ENCODE measurements at regions of chr22 and their contacts with region 1.

Region 1: DNA sequence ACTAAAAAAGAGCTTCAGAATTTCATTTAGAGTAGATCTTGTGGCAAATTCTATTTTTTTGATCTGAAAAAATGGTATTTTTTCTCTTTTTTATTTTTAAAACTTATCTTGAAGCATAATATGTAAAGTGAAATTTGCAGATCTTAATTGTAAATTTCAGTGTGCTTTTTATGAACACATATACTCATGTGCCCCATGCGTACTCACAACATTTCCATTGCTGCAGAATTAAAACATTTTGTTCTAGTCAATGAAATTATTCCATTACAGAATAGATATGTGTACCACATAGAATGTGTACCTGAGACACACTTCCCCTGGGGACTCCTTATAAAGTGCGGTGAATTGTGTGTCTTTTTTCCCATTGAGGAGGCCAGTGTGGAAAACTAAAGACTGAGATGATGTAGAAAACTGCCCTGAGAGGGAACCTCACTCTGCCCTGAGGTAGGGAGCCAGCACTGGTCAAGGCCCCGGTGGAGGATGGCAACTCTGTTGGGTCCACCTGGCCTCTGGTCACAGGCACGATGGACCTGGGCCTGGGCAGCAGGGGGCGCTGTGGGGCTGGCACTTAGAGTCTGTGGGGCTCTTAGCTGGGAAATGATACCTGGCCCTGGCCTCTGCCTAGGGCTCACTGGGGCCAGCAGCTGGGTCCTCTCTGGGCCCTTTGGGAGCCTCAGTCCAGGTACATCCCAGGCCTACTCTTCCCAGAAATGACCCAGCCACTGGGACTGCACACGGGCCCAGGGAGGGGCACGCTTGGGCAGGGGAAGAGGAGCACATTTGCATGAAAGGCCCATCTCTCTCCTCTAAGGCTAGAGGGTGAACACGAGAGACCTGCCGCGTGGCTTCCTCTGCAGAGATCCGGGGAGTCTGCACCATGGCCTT is 77.9 kb upstream of the TOP3B start:
- DNase-seq: peak; percentile 69
- ATAC-seq: peak; percentile 73
- H3K4me3 Mint-ChIP-seq: no peak overlapping the region
- H3K27ac Mint-ChIP-seq: peak overlapping the region; percentile 6
- H3K4me1 Mint-ChIP-seq: peaks cover 38% of the 10 kb centered on the region
- H3K27me3 Mint-ChIP-seq: no peaks in the 10 kb centered on the region
- CTCF ChIP-seq: no peak

Region 2: DNA sequence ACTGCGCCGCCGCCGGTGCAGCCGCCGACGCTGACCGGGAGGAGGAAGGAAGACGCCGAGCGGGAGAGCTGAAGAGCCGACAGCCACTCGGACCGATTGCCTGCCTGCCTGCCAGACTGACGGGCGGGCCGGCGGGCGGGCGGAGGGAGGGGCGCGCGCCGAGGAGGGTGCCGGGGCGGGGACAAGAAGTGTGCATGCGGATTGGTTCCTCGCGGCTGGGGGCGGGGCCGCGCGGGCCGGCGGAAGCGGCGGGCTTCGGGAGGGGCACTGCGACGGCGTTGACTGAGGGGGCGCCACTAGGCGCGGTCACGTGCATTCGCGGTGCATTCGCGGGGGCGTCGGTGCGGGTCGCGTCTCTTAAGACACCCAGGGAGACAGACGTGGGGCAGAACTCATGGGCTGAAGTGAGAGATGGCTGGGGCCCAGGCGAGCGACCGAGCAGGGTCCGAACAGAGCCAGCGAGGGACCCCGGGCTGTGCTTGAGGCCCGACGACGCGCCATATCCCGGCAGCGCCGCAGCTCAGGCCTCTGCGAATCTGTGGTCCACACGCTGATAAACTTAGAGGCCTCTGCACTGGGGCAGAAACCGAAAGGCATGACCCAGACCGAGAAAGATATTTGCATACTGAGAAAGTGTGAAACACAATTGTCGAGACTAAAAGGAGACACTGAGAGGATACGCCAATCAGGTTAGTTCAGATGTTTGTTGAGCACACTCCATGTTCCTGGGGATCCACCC is 192.7 kb before region 1 on chr22 and contains the start of gene MAPK1:
- CTCF ChIA-PET with region 1: no interaction called
- POLR2A ChIA-PET with region 1: no interaction called
- intact Hi-C with region 1: no loop called
- DNase-seq: peak; percentile 94
- ATAC-seq: peak; percentile 88
- H3K4me3 Mint-ChIP-seq: peak within 1 kb of the TSS; percentile 95
- H3K27ac Mint-ChIP-seq: peak within 1 kb of the TSS; percentile 100
- H3K4me1 Mint-ChIP-seq: peaks cover 50% of the 10 kb centered on the region
- H3K27me3 Mint-ChIP-seq: no peaks in the 10 kb centered on the region
- CTCF ChIP-seq: no peak
- total RNA-seq, gene MAPK1: 130 and 149 TPM in 2 replicates

Region 3: GRCh38 chr22:21972293-21972779 is 88.1 kb before region 1 on chr22:
- CTCF ChIA-PET with region 1: interaction called, 17 read pairs
- POLR2A ChIA-PET with region 1: no interaction called
- intact Hi-C with region 1: loop called (anchors 2 kb)
- DNase-seq: peak; percentile 56
- ATAC-seq: peak; percentile 77
- H3K4me3 Mint-ChIP-seq: no peak overlapping the region
- H3K27ac Mint-ChIP-seq: no peak overlapping the region
- H3K4me1 Mint-ChIP-seq: peaks cover 2% of the 10 kb centered on the region
- H3K27me3 Mint-ChIP-seq: no peaks in the 10 kb centered on the region
- CTCF ChIP-seq: peak; percentile 79

Region 4: DNA sequence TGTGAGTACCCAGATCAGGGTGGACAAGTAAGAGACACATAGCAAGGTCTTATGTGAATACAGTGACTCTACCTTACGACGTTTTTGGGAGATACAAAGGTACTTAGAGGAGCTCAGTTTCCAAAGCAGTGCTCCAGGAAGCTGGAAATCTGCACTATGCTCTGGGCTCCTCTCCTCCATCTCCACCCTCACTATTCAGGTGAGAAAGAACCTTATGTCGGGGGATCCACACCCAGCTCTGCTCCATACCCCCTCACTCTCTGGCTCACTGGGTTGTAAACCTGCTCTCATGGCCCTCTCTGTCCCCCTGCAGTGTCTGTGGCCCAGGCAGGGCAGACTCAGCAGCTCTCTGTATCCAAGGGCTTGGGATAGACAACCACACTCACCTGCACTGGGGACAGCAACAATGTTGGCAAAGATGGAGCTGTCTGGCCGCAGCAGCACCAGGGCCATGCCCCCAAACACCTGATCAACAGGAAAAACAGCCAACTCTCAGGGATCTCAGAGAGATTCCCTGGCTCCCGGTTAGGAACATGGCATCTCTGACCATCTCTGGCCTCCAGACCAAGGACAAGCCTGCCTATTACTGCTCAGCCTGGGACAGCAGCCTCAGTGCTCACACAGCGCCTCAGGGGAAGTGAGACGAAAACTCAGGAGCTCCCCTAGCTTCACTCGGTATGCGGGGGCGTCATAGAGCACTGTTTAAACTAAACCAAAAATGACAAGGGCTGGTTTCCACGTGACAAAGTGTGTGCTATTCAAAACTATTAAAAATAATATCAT is 17.0 kb before region 1 on chr22:
- CTCF ChIA-PET with region 1: interaction called, 43 read pairs
- POLR2A ChIA-PET with region 1: interaction called, 4 read pairs
- intact Hi-C with region 1: loop called (anchors 2 kb)
- DNase-seq: no peak
- ATAC-seq: peak; percentile 73
- H3K4me3 Mint-ChIP-seq: peak overlapping the region; percentile 82
- H3K27ac Mint-ChIP-seq: peak overlapping the region; percentile 82
- H3K4me1 Mint-ChIP-seq: peaks cover 73% of the 10 kb centered on the region
- H3K27me3 Mint-ChIP-seq: no peaks in the 10 kb centered on the region
- CTCF ChIP-seq: no peak

Region 5: DNA sequence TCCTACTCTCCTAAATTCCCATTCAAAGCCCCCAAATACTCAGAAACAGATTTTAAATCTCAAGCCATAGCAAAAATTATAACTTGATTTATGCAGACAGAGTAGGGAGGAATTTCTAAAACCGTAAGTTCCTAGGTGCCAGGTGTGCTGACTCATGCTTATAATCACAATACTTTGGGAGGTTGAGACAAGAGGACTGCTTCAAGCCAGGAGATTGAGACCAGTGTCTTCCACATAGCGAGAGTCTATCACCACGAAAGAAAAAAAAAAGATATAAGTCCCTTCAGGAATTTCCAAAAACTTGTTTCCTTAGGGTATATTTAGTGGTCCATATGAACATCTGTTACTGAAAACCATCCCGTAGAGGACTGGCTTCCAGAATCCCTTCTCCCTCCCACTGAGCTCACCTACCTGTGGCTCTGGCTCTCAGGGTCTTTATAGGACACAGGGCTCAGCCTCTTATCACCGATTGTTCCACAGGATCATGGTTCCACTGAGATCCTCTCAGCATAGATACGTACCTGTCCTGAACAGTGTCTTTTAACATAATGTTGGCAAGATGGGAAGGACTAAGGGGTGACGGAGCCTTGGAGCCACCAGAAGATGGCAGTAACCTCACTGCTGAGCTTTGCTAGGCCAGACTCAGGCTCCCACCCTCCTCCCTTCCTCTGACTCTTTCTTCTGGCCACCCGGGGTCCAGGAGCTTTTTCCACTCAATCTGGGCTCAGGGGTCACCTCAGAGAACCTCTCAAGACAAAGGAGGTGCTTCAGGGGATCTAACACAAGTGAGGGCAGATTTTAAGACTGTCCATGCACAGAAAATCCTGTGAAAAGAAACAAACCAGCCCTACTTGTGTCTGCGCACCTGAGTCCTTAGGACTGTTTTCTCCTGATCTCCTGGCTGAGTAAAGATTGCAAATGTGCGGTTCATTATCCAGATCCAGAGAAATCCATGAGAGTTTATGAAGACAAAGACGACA is 39.7 kb after region 1 on chr22:
- CTCF ChIA-PET with region 1: interaction called, 16 read pairs
- POLR2A ChIA-PET with region 1: interaction called, 4 read pairs
- intact Hi-C with region 1: loop called (anchors 5 kb)
- DNase-seq: no peak
- ATAC-seq: peak; percentile 19
- H3K4me3 Mint-ChIP-seq: no peak overlapping the region
- H3K27ac Mint-ChIP-seq: peak overlapping the region; percentile 92
- H3K4me1 Mint-ChIP-seq: peaks cover 52% of the 10 kb centered on the region
- H3K27me3 Mint-ChIP-seq: no peaks in the 10 kb centered on the region
- CTCF ChIP-seq: no peak

Region 6: GRCh38 chr22:22156716-22157347 is 96.4 kb after region 1 on chr22:
- CTCF ChIA-PET with region 1: interaction called, 9 read pairs
- POLR2A ChIA-PET with region 1: no interaction called
- intact Hi-C with region 1: loop called (anchors 1 kb)
- DNase-seq: peak; percentile 64
- ATAC-seq: peak; percentile 75
- H3K4me3 Mint-ChIP-seq: peak overlapping the region; percentile 78
- H3K27ac Mint-ChIP-seq: peak overlapping the region; percentile 98
- H3K4me1 Mint-ChIP-seq: peaks cover 52% of the 10 kb centered on the region
- H3K27me3 Mint-ChIP-seq: no peaks in the 10 kb centered on the region
- CTCF ChIP-seq: peak; percentile 81

Region 7: GRCh38 chr22:22195265-22196017 is 135.0 kb after region 1 on chr22:
- CTCF ChIA-PET with region 1: interaction called, 14 read pairs
- POLR2A ChIA-PET with region 1: no interaction called
- intact Hi-C with region 1: loop called (anchors 2 kb)
- DNase-seq: peak; percentile 79
- ATAC-seq: peak; percentile 71
- H3K4me3 Mint-ChIP-seq: peak overlapping the region; percentile 68
- H3K27ac Mint-ChIP-seq: peak overlapping the region; percentile 85
- H3K4me1 Mint-ChIP-seq: peaks cover 59% of the 10 kb centered on the region
- H3K27me3 Mint-ChIP-seq: no peaks in the 10 kb centered on the region
- CTCF ChIP-seq: peak; percentile 80

Region 8: DNA sequence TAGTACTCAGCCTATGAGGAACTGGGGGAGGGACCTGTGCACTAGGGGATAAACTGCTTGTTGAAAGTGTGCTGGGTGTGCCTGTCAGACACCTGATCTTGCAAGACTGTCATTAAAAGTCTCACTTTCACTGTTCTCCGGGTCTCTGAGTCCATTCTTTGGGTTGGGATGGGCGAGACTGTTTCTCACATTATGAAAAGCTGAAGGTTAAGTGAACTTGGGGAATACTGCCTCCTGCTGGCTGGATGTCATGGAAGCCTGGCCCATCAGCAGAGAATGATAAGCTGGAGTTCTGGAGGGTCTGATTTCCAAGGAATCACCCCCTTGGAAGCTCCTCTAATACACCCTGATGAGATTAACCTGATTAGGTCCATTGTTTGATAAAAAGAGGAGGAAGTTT is 175.1 kb after region 1 on chr22:
- CTCF ChIA-PET with region 1: interaction called, 14 read pairs
- POLR2A ChIA-PET with region 1: no interaction called
- intact Hi-C with region 1: loop called (anchors 1 kb)
- DNase-seq: no peak
- ATAC-seq: no peak
- H3K4me3 Mint-ChIP-seq: peak overlapping the region; percentile 38
- H3K27ac Mint-ChIP-seq: no peak overlapping the region
- H3K4me1 Mint-ChIP-seq: peaks cover 25% of the 10 kb centered on the region
- H3K27me3 Mint-ChIP-seq: peaks cover 2% of the 10 kb centered on the region
- CTCF ChIP-seq: no peak